Heart right ventricle (tissue), 16 donors: ENCODE measurements at regions of chr6 and their contacts with region 1.

Region 1: DNA sequence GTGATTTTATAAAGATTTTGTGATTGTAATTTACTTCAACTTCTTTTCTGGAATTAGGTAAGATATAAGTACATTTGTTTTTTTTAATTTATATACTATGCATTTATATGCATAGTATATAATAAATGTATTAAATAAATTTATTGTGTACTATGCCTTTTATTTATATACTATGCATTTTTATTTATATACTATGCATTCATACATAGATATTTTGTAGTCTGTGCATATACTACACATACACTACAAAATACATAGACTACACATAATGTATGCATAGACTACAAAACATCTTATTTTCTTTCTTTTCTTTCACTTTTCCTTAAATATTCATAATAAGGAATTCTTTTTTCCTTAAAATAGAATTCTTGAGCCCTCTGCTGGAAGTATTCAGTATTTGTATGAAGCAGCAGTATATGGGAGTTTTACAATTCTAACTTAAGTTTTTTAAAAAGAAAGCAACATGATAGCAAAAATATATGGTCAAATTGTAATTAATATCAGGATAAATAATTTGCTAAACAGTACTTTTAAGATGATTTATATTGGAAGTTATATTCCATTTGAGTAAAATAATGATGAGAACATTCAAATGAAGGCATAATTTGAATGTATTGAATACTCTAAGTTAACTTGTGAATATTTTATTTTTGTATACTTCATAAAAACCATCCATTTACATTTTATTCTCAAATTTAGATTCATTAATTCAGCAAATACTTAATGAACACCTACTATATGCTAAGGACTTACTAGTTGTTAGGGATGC is 129.3 kb downstream of the KLHL32 start:
- DNase-seq: no peak
- ATAC-seq: no peak
- H3K4me3 ChIP-seq: no peak overlapping the region
- H3K27ac ChIP-seq: no peak overlapping the region
- H3K4me1 ChIP-seq: peaks cover 0 to 4% (median 0%) of the 10 kb centered on the region in 9 donors
- H3K27me3 ChIP-seq: no peaks in the 10 kb centered on the region
- CTCF ChIP-seq: peak; percentile 14 to 70 (median 63)

Region 2: GRCh38 chr6:96907498-96907897 is 146.3 kb before region 1 on chr6:
- intact Hi-C with region 1: loop called in 3 of 10 experiments (anchors 5 kb)
- DNase-seq: no peak
- ATAC-seq: no peak
- H3K4me3 ChIP-seq: no peak overlapping the region
- H3K27ac ChIP-seq: no peak overlapping the region
- H3K4me1 ChIP-seq: no peaks in the 10 kb centered on the region
- H3K27me3 ChIP-seq: peaks cover 0 to 6% (median 0%) of the 10 kb centered on the region in 7 donors
- CTCF ChIP-seq: no peak

Region 3: GRCh38 chr6:96923871-96924493 is 129.8 kb before region 1 on chr6:
- intact Hi-C with region 1: loop called in 1 of 10 experiments (anchors 10 kb)
- DNase-seq: no peak
- ATAC-seq: peak; percentile 17 to 86 (median 75)
- H3K4me3 ChIP-seq: peak overlapping the region; percentile 49 to 69 (median 62)
- H3K27ac ChIP-seq: peak overlapping the region in 9 of 10 donors; percentile 34 to 79 (median 70)
- H3K4me1 ChIP-seq: peaks cover 0 to 16% (median 7%) of the 10 kb centered on the region in 9 donors
- H3K27me3 ChIP-seq: peaks cover 0 to 13% (median 0%) of the 10 kb centered on the region in 7 donors
- CTCF ChIP-seq: no peak

Region 4: GRCh38 chr6:96975852-96976251 is 78.0 kb before region 1 on chr6:
- intact Hi-C with region 1: no loop called
- DNase-seq: no peak
- ATAC-seq: no peak
- H3K4me3 ChIP-seq: no peak overlapping the region
- H3K27ac ChIP-seq: no peak overlapping the region
- H3K4me1 ChIP-seq: no peaks in the 10 kb centered on the region
- H3K27me3 ChIP-seq: no peaks in the 10 kb centered on the region
- CTCF ChIP-seq: no peak

Region 5: GRCh38 chr6:97021194-97021593 is 32.6 kb before region 1 on chr6:
- intact Hi-C with region 1: no loop called
- DNase-seq: no peak
- ATAC-seq: no peak
- H3K4me3 ChIP-seq: no peak overlapping the region
- H3K27ac ChIP-seq: no peak overlapping the region
- H3K4me1 ChIP-seq: peaks cover 0 to 6% (median 0%) of the 10 kb centered on the region in 9 donors
- H3K27me3 ChIP-seq: no peaks in the 10 kb centered on the region
- CTCF ChIP-seq: no peak